ENCODE measurements at regions of chr14 and their contacts with region 1.

Region 1: DNA sequence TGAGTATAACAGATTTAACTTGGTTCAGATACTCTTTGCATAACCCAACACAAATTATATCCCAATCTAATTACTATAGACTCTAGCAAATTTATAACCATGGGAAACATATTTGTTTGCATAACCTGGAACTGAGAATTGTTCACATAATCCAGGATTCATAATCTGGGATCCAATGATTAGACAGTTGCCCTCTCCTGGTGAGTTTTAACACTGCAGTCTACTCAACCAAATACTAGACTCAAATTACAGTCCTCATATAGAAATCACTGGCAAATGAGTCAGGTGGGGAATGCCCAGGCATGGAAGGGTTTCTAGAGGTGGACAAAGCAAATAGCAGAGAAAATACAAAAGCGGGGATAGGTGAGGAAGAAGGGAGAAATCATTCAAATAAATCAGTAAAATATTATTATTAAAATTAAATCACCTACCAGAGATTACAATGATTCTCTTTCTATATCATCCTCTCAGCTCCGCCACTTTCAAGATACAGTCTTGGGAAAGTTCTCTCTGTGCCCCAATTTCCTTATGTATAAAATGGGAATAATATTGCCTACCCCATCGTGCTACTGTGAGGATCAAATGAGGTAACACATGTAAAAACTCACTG is 9.4 kb downstream of the GCH1 start:
- DNase-seq: peak in 6 of 9 donors; percentile 13 to 35 (median 26)
- ATAC-seq: peak; percentile 87
- H3K4me3 ChIP-seq: no peak overlapping the region
- H3K4me3 Mint-ChIP-seq: no peak overlapping the region
- H3K27ac ChIP-seq: no peak overlapping the region
- H3K27ac Mint-ChIP-seq: no peak overlapping the region
- H3K4me1 ChIP-seq: peaks cover 0 to 3% of the 10 kb centered on the region in 2 donors
- H3K4me1 Mint-ChIP-seq: peaks cover 32 to 60% (median 51%) of the 10 kb centered on the region in 7 donors
- H3K27me3 ChIP-seq: no peaks in the 10 kb centered on the region
- H3K27me3 Mint-ChIP-seq: no peaks in the 10 kb centered on the region

Region 2: GRCh38 chr14:54805521-54806322 is 87.5 kb before region 1 on chr14:
- CTCF ChIA-PET with region 1: interaction called, 3 read pairs
- POLR2A ChIA-PET with region 1: no interaction called
- intact Hi-C with region 1: loop called in 1 of 2 experiments (anchors 2 kb)
- DNase-seq: peak; percentile 38 to 75 (median 56)
- ATAC-seq: peak; percentile 87
- H3K4me3 ChIP-seq: no peak overlapping the region
- H3K4me3 Mint-ChIP-seq: peak overlapping the region in 5 of 10 donors; percentile 20 to 58 (median 42)
- H3K27ac ChIP-seq: no peak overlapping the region
- H3K27ac Mint-ChIP-seq: peak overlapping the region in 1 of 9 donors; percentile 28
- H3K4me1 ChIP-seq: no peaks in the 10 kb centered on the region
- H3K4me1 Mint-ChIP-seq: peaks cover 0 to 6% (median 4%) of the 10 kb centered on the region in 7 donors
- H3K27me3 ChIP-seq: no peaks in the 10 kb centered on the region
- H3K27me3 Mint-ChIP-seq: peaks cover 10 to 27% (median 20%) of the 10 kb centered on the region in 5 donors

Region 3: GRCh38 chr14:54839701-54840119 is 53.5 kb before region 1 on chr14:
- CTCF ChIA-PET with region 1: no interaction called
- POLR2A ChIA-PET with region 1: no interaction called
- intact Hi-C with region 1: loop called in 1 of 2 experiments (anchors 1 kb)
- DNase-seq: no peak
- ATAC-seq: no peak
- H3K4me3 ChIP-seq: no peak overlapping the region
- H3K4me3 Mint-ChIP-seq: no peak overlapping the region
- H3K27ac ChIP-seq: no peak overlapping the region
- H3K27ac Mint-ChIP-seq: peak overlapping the region in 2 of 9 donors; percentile 33 to 44
- H3K4me1 ChIP-seq: no peaks in the 10 kb centered on the region
- H3K4me1 Mint-ChIP-seq: peaks cover 0 to 1% (median 0%) of the 10 kb centered on the region in 7 donors
- H3K27me3 ChIP-seq: no peaks in the 10 kb centered on the region
- H3K27me3 Mint-ChIP-seq: no peaks in the 10 kb centered on the region

Region 4: GRCh38 chr14:54866588-54866987 is 26.7 kb before region 1 on chr14:
- CTCF ChIA-PET with region 1: no interaction called
- POLR2A ChIA-PET with region 1: interaction called, 9 read pairs
- intact Hi-C with region 1: loop called in 1 of 2 experiments (anchors 1 kb)
- DNase-seq: no peak
- ATAC-seq: no peak
- H3K4me3 ChIP-seq: no peak overlapping the region
- H3K4me3 Mint-ChIP-seq: no peak overlapping the region
- H3K27ac ChIP-seq: no peak overlapping the region
- H3K27ac Mint-ChIP-seq: peak overlapping the region in 2 of 9 donors; percentile 12 to 56
- H3K4me1 ChIP-seq: no peaks in the 10 kb centered on the region
- H3K4me1 Mint-ChIP-seq: peaks cover 19 to 46% (median 33%) of the 10 kb centered on the region in 7 donors
- H3K27me3 ChIP-seq: no peaks in the 10 kb centered on the region
- H3K27me3 Mint-ChIP-seq: no peaks in the 10 kb centered on the region

Region 5: GRCh38 chr14:55624913-55625312 is 731.7 kb after region 1 on chr14:
- CTCF ChIA-PET with region 1: no interaction called
- POLR2A ChIA-PET with region 1: no interaction called
- intact Hi-C with region 1: no loop called
- DNase-seq: no peak
- ATAC-seq: no peak
- H3K4me3 ChIP-seq: no peak overlapping the region
- H3K4me3 Mint-ChIP-seq: no peak overlapping the region
- H3K27ac ChIP-seq: no peak overlapping the region
- H3K27ac Mint-ChIP-seq: peak overlapping the region in 1 of 9 donors; percentile 1
- H3K4me1 ChIP-seq: no peaks in the 10 kb centered on the region
- H3K4me1 Mint-ChIP-seq: peaks cover 1 to 17% (median 14%) of the 10 kb centered on the region in 7 donors
- H3K27me3 ChIP-seq: no peaks in the 10 kb centered on the region
- H3K27me3 Mint-ChIP-seq: no peaks in the 10 kb centered on the region